ENCODE measurements at regions of chr7 and their contacts with region 1.

Region 1: GRCh38 chr7:518630-519483 is 789 bp downstream of the PDGFA start:
- DNase-seq: peak in 5 of 9 experiments; percentile 6 to 48 (median 26)
- ATAC-seq: peak; percentile 16
- H3K4me3 ChIP-seq: peak overlapping the region in 1 of 2 experiments; percentile 30
- H3K4me3 Mint-ChIP-seq: peak overlapping the region; percentile 79
- H3K27ac ChIP-seq: no peak overlapping the region
- H3K27ac Mint-ChIP-seq: peak overlapping the region; percentile 75
- H3K4me1 ChIP-seq: peaks cover 24% of the 10 kb centered on the region
- H3K4me1 Mint-ChIP-seq: peaks cover 21% of the 10 kb centered on the region
- H3K27me3 ChIP-seq: peaks cover 33 to 34% of the 10 kb centered on the region in 2 experiments
- H3K27me3 Mint-ChIP-seq: peaks cover 31% of the 10 kb centered on the region
- CTCF ChIP-seq: no peak

Region 2: GRCh38 chr7:400872-401485 is 117.9 kb before region 1 on chr7:
- CTCF ChIA-PET with region 1: no interaction called
- POLR2A ChIA-PET with region 1: no interaction called
- intact Hi-C with region 1: no loop called
- DNase-seq: peak in 1 of 9 experiments; percentile 2
- ATAC-seq: no peak
- H3K4me3 ChIP-seq: no peak overlapping the region
- H3K4me3 Mint-ChIP-seq: no peak overlapping the region
- H3K27ac ChIP-seq: no peak overlapping the region
- H3K27ac Mint-ChIP-seq: no peak overlapping the region
- H3K4me1 ChIP-seq: no peaks in the 10 kb centered on the region
- H3K4me1 Mint-ChIP-seq: no peaks in the 10 kb centered on the region
- H3K27me3 ChIP-seq: no peaks in the 10 kb centered on the region
- H3K27me3 Mint-ChIP-seq: peaks cover 4% of the 10 kb centered on the region
- CTCF ChIP-seq: no peak

Region 3: GRCh38 chr7:726084-726853 is 207.4 kb after region 1 on chr7 and contains the start of gene DNAAF5:
- CTCF ChIA-PET with region 1: no interaction called
- POLR2A ChIA-PET with region 1: no interaction called
- intact Hi-C with region 1: loop called in 1 of 2 experiments (anchors 5 kb)
- DNase-seq: peak; percentile 69 to 91 (median 86)
- ATAC-seq: peak; percentile 87
- H3K4me3 ChIP-seq: peak within 1 kb of the TSS; percentile 65 to 77
- H3K4me3 Mint-ChIP-seq: peak within 1 kb of the TSS; percentile 79
- H3K27ac ChIP-seq: peak within 1 kb of the TSS; percentile 65 to 67
- H3K27ac Mint-ChIP-seq: peak within 1 kb of the TSS; percentile 75
- H3K4me1 ChIP-seq: peaks cover 14% of the 10 kb centered on the region
- H3K4me1 Mint-ChIP-seq: peaks cover 17% of the 10 kb centered on the region
- H3K27me3 ChIP-seq: no peaks in the 10 kb centered on the region
- H3K27me3 Mint-ChIP-seq: no peaks in the 10 kb centered on the region
- CTCF ChIP-seq: no peak
- total RNA-seq, gene DNAAF5: 4.3 to 4.9 TPM

Region 4: GRCh38 chr7:774161-775109 is 255.6 kb after region 1 on chr7:
- CTCF ChIA-PET with region 1: interaction called, 3 read pairs
- POLR2A ChIA-PET with region 1: no interaction called
- intact Hi-C with region 1: loop called in 1 of 2 experiments (anchors 5 kb)
- DNase-seq: peak; percentile 32 to 80 (median 61)
- ATAC-seq: peak; percentile 93
- H3K4me3 ChIP-seq: no peak overlapping the region
- H3K4me3 Mint-ChIP-seq: no peak overlapping the region
- H3K27ac ChIP-seq: no peak overlapping the region
- H3K27ac Mint-ChIP-seq: no peak overlapping the region
- H3K4me1 ChIP-seq: no peaks in the 10 kb centered on the region
- H3K4me1 Mint-ChIP-seq: no peaks in the 10 kb centered on the region
- H3K27me3 ChIP-seq: no peaks in the 10 kb centered on the region
- H3K27me3 Mint-ChIP-seq: no peaks in the 10 kb centered on the region
- CTCF ChIP-seq: peak; percentile 93